ENCODE measurements at regions of chr7 and their contacts with region 1.

Region 1: GRCh38 chr7:95684037-95684436 is 87.7 kb upstream of the PDK4 start:
- DNase-seq: no peak
- H3K4me3 ChIP-seq: no peak overlapping the region
- H3K27ac ChIP-seq: no peak overlapping the region
- H3K27me3 ChIP-seq: no peaks in the 10 kb centered on the region
- CTCF ChIP-seq: peak; percentile 48

Region 2: GRCh38 chr7:95430864-95431263 is 253.2 kb before region 1 on chr7:
- CTCF ChIA-PET with region 1: no interaction called
- POLR2A ChIA-PET with region 1: no interaction called
- DNase-seq: no peak
- H3K4me3 ChIP-seq: no peak overlapping the region
- H3K27ac ChIP-seq: no peak overlapping the region
- H3K27me3 ChIP-seq: no peaks in the 10 kb centered on the region
- CTCF ChIP-seq: no peak

Region 3: GRCh38 chr7:95527033-95527775 is 156.8 kb before region 1 on chr7:
- CTCF ChIA-PET with region 1: interaction called, 641 read pairs
- POLR2A ChIA-PET with region 1: no interaction called
- DNase-seq: no peak
- H3K4me3 ChIP-seq: no peak overlapping the region
- H3K27ac ChIP-seq: no peak overlapping the region
- H3K27me3 ChIP-seq: no peaks in the 10 kb centered on the region
- CTCF ChIP-seq: peak; percentile 90

Measured in AG04450 (cell line).